ENCODE measurements at regions of chr10 and their contacts with region 1.

Region 1: DNA sequence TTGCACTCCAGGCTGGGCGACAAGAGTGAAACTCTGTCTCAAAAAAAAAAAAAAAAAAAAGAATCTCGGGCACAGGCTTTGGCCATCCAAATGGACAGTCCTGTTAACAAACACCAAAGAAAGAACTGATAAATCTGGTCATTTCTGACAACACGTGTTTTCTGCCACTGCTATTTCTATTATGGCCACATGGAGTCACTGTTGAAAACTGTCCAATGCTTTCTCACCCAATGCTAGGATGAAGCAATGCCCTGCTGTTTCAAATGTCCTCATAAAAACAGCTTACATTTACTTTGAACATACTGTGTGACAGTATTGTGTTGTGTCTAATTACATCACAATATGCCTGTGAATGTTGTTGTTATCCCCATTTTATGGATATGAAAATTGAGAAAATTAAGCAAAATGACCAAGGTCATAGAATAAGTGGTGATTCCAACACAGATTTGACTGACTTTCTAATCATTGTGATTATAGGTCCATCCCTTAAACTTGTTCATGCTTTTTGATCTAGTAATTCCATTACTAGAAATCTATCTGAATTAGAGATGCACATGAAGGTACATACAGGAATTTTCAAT is 19.9 kb upstream of the MAP3K8 start:
- DNase-seq: peak in 4 of 9 donors; percentile 26 to 52 (median 33)
- ATAC-seq: peak; percentile 81
- H3K4me3 ChIP-seq: no peak overlapping the region
- H3K4me3 Mint-ChIP-seq: no peak overlapping the region
- H3K27ac ChIP-seq: no peak overlapping the region
- H3K27ac Mint-ChIP-seq: peak overlapping the region in 1 of 9 donors; percentile 38
- H3K4me1 ChIP-seq: peaks cover 9 to 12% of the 10 kb centered on the region in 2 donors
- H3K4me1 Mint-ChIP-seq: peaks cover 8 to 31% (median 14%) of the 10 kb centered on the region in 7 donors
- H3K27me3 ChIP-seq: no peaks in the 10 kb centered on the region
- H3K27me3 Mint-ChIP-seq: peaks cover 0 to 3% (median 0%) of the 10 kb centered on the region in 5 donors

Region 2: GRCh38 chr10:30098613-30099012 is 315.5 kb before region 1 on chr10:
- CTCF ChIA-PET with region 1: no interaction called
- POLR2A ChIA-PET with region 1: no interaction called
- intact Hi-C with region 1: no loop called
- DNase-seq: no peak
- ATAC-seq: no peak
- H3K4me3 ChIP-seq: no peak overlapping the region
- H3K4me3 Mint-ChIP-seq: no peak overlapping the region
- H3K27ac ChIP-seq: no peak overlapping the region
- H3K27ac Mint-ChIP-seq: no peak overlapping the region
- H3K4me1 ChIP-seq: no peaks in the 10 kb centered on the region
- H3K4me1 Mint-ChIP-seq: no peaks in the 10 kb centered on the region
- H3K27me3 ChIP-seq: no peaks in the 10 kb centered on the region
- H3K27me3 Mint-ChIP-seq: peaks cover 29 to 46% (median 39%) of the 10 kb centered on the region in 5 donors

Region 3: DNA sequence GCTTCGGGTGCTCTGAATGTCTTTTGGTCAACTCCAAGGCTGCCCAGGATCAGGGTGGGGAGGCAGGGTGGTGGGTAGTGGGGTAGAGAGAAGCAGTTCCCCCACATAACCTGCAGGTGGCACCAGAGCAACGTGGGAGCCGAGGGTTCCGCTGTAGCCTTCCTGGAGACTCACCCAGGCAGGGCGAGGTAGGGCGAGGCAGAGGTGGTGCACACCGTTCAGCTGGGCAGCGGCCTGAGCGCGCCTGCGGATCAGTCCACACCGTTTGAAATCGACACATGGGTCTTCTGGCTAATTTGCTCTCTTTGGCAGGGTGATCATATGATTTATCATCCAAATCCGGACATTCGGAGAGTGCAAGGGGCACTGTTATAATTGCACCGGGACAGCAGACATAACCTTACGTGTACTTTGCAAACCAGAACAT is 21.5 kb before region 1 on chr10:
- CTCF ChIA-PET with region 1: interaction called, 7 read pairs
- POLR2A ChIA-PET with region 1: no interaction called
- intact Hi-C with region 1: loop called (anchors 1 kb)
- DNase-seq: peak; percentile 45 to 80 (median 66)
- ATAC-seq: peak; percentile 99
- H3K4me3 ChIP-seq: no peak overlapping the region
- H3K4me3 Mint-ChIP-seq: peak overlapping the region in 2 of 10 donors; percentile 18 to 57
- H3K27ac ChIP-seq: no peak overlapping the region
- H3K27ac Mint-ChIP-seq: peak overlapping the region in 1 of 9 donors; percentile 47
- H3K4me1 ChIP-seq: peaks cover 0 to 5% of the 10 kb centered on the region in 2 donors
- H3K4me1 Mint-ChIP-seq: peaks cover 0 to 4% (median 3%) of the 10 kb centered on the region in 7 donors
- H3K27me3 ChIP-seq: no peaks in the 10 kb centered on the region
- H3K27me3 Mint-ChIP-seq: peaks cover 0 to 42% (median 6%) of the 10 kb centered on the region in 5 donors

Region 4: GRCh38 chr10:30456266-30456665 is 42.2 kb after region 1 on chr10:
- CTCF ChIA-PET with region 1: no interaction called
- POLR2A ChIA-PET with region 1: interaction called, 3 read pairs
- intact Hi-C with region 1: loop called (anchors 2 to 10 kb)
- DNase-seq: peak in 5 of 9 donors; percentile 11 to 22 (median 16)
- ATAC-seq: peak; percentile 74
- H3K4me3 ChIP-seq: peak overlapping the region; percentile 17
- H3K4me3 Mint-ChIP-seq: peak overlapping the region; percentile 58 to 78 (median 72)
- H3K27ac ChIP-seq: no peak overlapping the region
- H3K27ac Mint-ChIP-seq: peak overlapping the region; percentile 11 to 85 (median 53)
- H3K4me1 ChIP-seq: peaks cover 18 to 26% of the 10 kb centered on the region in 2 donors
- H3K4me1 Mint-ChIP-seq: peaks cover 17 to 35% (median 20%) of the 10 kb centered on the region in 7 donors
- H3K27me3 ChIP-seq: no peaks in the 10 kb centered on the region
- H3K27me3 Mint-ChIP-seq: no peaks in the 10 kb centered on the region

Region 5: DNA sequence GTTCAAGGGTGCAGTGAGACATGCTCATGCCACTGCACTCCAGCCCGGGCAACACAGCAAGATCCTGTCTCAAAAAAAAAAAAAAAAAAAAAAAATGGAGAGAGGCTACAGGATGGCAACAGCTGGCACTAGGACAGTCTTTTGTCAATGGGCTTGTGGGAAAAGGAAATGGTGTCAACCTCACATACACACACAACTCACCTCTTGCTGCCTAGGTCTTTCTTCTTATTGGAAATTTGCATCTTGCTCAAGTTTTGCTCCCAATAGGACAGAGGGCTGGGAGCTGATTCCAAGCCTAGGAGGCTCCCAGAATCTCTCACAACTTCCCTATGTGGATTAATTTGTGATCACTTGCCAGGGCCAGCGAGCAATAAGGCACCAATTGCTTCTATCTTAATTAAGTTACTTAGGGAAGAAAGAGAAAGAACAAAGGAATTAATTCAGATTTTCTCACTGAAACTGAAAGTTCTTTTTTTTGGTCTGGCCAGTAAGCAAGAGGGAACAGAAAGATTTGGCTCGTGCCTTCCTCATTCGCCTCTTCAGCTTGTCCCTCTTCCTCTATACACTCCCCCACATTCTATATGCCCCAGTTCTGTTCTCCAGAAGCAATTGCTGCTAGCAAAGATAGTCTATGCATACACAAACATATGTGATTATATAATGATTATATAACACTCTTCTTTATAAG is 53.7 kb after region 1 on chr10:
- CTCF ChIA-PET with region 1: no interaction called
- POLR2A ChIA-PET with region 1: no interaction called
- intact Hi-C with region 1: loop called in 1 of 2 experiments (anchors 10 kb)
- DNase-seq: no peak
- ATAC-seq: peak; percentile 60
- H3K4me3 ChIP-seq: no peak overlapping the region
- H3K4me3 Mint-ChIP-seq: no peak overlapping the region
- H3K27ac ChIP-seq: no peak overlapping the region
- H3K27ac Mint-ChIP-seq: peak overlapping the region in 1 of 9 donors; percentile 43
- H3K4me1 ChIP-seq: no peaks in the 10 kb centered on the region
- H3K4me1 Mint-ChIP-seq: peaks cover 0 to 26% (median 7%) of the 10 kb centered on the region in 7 donors
- H3K27me3 ChIP-seq: no peaks in the 10 kb centered on the region
- H3K27me3 Mint-ChIP-seq: peaks cover 0 to 6% (median 0%) of the 10 kb centered on the region in 5 donors

Region 6: GRCh38 chr10:30534465-30535144 is 120.5 kb after region 1 on chr10:
- CTCF ChIA-PET with region 1: interaction called, 13 read pairs
- POLR2A ChIA-PET with region 1: interaction called, 6 read pairs
- intact Hi-C with region 1: loop called (anchors 1 kb)
- DNase-seq: peak; percentile 36 to 79 (median 72)
- ATAC-seq: peak; percentile 69
- H3K4me3 ChIP-seq: no peak overlapping the region
- H3K4me3 Mint-ChIP-seq: no peak overlapping the region
- H3K27ac ChIP-seq: no peak overlapping the region
- H3K27ac Mint-ChIP-seq: peak overlapping the region in 2 of 9 donors; percentile 2 to 23
- H3K4me1 ChIP-seq: peaks cover 7 to 21% of the 10 kb centered on the region in 2 donors
- H3K4me1 Mint-ChIP-seq: peaks cover 8 to 39% (median 12%) of the 10 kb centered on the region in 7 donors
- H3K27me3 ChIP-seq: no peaks in the 10 kb centered on the region
- H3K27me3 Mint-ChIP-seq: peaks cover 0 to 16% (median 0%) of the 10 kb centered on the region in 5 donors

Region 7: GRCh38 chr10:30591249-30591670 is 177.2 kb after region 1 on chr10:
- CTCF ChIA-PET with region 1: interaction called, 4 read pairs
- POLR2A ChIA-PET with region 1: no interaction called
- intact Hi-C with region 1: loop called in 1 of 2 experiments (anchors 1 kb)
- DNase-seq: peak in 7 of 9 donors; percentile 23 to 61 (median 48)
- ATAC-seq: peak; percentile 80
- H3K4me3 ChIP-seq: no peak overlapping the region
- H3K4me3 Mint-ChIP-seq: no peak overlapping the region
- H3K27ac ChIP-seq: no peak overlapping the region
- H3K27ac Mint-ChIP-seq: no peak overlapping the region
- H3K4me1 ChIP-seq: no peaks in the 10 kb centered on the region
- H3K4me1 Mint-ChIP-seq: peaks cover 0 to 3% (median 0%) of the 10 kb centered on the region in 7 donors
- H3K27me3 ChIP-seq: no peaks in the 10 kb centered on the region
- H3K27me3 Mint-ChIP-seq: peaks cover 0 to 26% (median 13%) of the 10 kb centered on the region in 5 donors

Region 8: GRCh38 chr10:30940256-30940655 is 526.2 kb after region 1 on chr10:
- CTCF ChIA-PET with region 1: no interaction called
- POLR2A ChIA-PET with region 1: no interaction called
- intact Hi-C with region 1: no loop called
- DNase-seq: no peak
- ATAC-seq: no peak
- H3K4me3 ChIP-seq: no peak overlapping the region
- H3K4me3 Mint-ChIP-seq: no peak overlapping the region
- H3K27ac ChIP-seq: no peak overlapping the region
- H3K27ac Mint-ChIP-seq: no peak overlapping the region
- H3K4me1 ChIP-seq: no peaks in the 10 kb centered on the region
- H3K4me1 Mint-ChIP-seq: peaks cover under 1 to 30% (median 23%) of the 10 kb centered on the region in 7 donors
- H3K27me3 ChIP-seq: no peaks in the 10 kb centered on the region
- H3K27me3 Mint-ChIP-seq: no peaks in the 10 kb centered on the region